ENCODE measurements at regions of chr17 and their contacts with region 1.

Region 1: DNA sequence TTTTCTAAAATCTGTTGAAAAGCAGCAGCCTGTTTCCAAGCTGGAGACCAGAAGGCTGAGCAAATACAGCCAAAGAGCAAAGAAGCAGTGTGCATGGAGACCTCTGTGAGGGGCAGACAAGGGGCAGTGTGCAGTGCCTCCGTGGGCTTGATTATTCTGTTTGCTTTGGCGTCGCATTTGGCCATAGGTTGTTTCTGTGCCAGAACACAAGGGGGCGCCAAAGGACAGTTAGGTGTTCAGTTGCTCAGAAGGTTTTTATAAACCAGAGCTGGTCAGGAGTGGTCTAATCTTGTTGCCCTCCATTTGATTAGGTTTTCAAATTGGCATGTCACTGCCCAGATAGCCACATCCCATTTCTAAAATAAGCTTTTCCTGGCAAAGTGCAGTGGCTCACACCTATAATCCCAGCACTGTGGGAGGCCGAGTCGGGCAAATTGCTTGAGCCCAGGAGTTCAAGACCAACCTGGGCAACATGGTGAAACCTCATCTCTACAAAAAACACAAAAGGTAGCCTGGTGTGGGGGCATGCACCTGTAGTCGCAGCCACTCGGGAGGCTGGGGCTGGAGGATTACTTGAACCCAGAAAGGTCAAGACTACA is 10.6 kb downstream of the MYH3 start:
- DNase-seq: peak; percentile 58 to 65 (median 63)
- H3K4me3 ChIP-seq: no peak overlapping the region
- H3K4me3 Mint-ChIP-seq: no peak overlapping the region
- H3K27ac ChIP-seq: no peak overlapping the region
- H3K27ac Mint-ChIP-seq: no peak overlapping the region
- H3K4me1 ChIP-seq: no peaks in the 10 kb centered on the region
- H3K4me1 Mint-ChIP-seq: peaks cover 0 to 5% (median 2%) of the 10 kb centered on the region in 4 donors
- H3K27me3 ChIP-seq: no peaks in the 10 kb centered on the region
- H3K27me3 Mint-ChIP-seq: no peaks in the 10 kb centered on the region

Region 2: DNA sequence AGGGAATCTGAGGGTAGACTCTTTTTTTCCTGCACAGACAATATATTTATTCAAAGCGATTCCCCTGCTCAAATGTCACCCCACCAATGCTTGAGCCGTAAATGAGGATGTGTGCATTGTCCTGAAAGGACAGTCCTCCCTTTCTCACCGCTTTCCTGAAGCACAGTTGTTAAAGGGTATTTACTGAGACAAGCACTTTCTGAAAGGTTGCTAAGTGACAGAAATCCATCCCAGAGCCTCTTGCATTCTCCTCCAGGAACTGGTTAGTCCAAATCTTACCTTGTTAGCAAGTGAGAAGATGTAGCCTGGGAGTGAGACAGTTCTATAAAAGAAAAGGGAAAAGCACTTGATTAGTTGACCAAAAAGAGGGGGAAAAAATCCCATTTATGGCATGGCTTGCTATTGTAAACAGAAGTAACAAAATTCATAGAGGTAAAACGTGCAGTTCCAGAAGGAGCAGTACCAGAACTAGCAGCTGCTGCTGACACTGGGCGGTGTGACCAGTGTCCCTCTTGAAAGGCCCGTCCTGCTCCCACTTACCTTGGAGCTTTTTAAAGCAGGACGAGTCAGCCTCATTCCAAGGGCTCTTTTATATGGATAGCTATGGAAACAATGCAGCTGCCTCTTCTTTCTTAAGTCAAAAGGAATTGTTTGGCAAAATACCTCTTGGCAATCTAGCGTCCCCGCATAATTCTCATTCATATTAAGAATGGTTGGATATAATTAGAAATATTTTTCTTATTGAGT is 97.2 kb before region 1 on chr17 and contains the start of gene MYH2:
- CTCF ChIA-PET with region 1: no interaction called
- POLR2A ChIA-PET with region 1: no interaction called
- intact Hi-C with region 1: no loop called
- DNase-seq: no peak
- H3K4me3 ChIP-seq: no peak within 1 kb of the TSS
- H3K4me3 Mint-ChIP-seq: no peak within 1 kb of the TSS
- H3K27ac ChIP-seq: no peak within 1 kb of the TSS
- H3K27ac Mint-ChIP-seq: no peak within 1 kb of the TSS
- H3K4me1 ChIP-seq: no peaks in the 10 kb centered on the region
- H3K4me1 Mint-ChIP-seq: no peaks in the 10 kb centered on the region
- H3K27me3 ChIP-seq: no peaks in the 10 kb centered on the region
- H3K27me3 Mint-ChIP-seq: peaks cover 9 to 10% of the 10 kb centered on the region in 2 donors
- total RNA-seq, gene MYH2: not detected

Region 3: DNA sequence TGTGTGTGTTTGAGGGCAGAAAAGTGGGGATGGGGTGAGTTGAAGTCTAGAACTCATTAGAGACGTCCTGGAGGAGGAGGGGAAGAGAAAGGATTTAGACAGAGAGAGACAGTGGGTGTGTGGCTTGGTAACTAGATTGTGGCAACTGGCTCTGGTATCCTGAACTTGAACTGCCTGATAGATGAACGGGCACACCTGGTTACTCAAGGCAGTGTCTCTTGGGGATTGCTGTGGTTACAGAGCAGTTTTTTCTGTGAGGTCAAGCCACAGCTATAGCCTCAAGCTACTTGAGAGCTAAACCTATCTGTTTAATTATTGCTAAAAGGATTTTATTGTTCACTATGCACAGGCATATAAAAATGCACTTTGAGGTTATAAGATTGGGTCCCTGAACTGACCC is 67.2 kb before region 1 on chr17:
- CTCF ChIA-PET with region 1: no interaction called
- POLR2A ChIA-PET with region 1: no interaction called
- intact Hi-C with region 1: no loop called
- DNase-seq: no peak
- H3K4me3 ChIP-seq: no peak overlapping the region
- H3K4me3 Mint-ChIP-seq: no peak overlapping the region
- H3K27ac ChIP-seq: no peak overlapping the region
- H3K27ac Mint-ChIP-seq: no peak overlapping the region
- H3K4me1 ChIP-seq: no peaks in the 10 kb centered on the region
- H3K4me1 Mint-ChIP-seq: no peaks in the 10 kb centered on the region
- H3K27me3 ChIP-seq: no peaks in the 10 kb centered on the region
- H3K27me3 Mint-ChIP-seq: peaks cover 3 to 13% of the 10 kb centered on the region in 2 donors

Region 4: DNA sequence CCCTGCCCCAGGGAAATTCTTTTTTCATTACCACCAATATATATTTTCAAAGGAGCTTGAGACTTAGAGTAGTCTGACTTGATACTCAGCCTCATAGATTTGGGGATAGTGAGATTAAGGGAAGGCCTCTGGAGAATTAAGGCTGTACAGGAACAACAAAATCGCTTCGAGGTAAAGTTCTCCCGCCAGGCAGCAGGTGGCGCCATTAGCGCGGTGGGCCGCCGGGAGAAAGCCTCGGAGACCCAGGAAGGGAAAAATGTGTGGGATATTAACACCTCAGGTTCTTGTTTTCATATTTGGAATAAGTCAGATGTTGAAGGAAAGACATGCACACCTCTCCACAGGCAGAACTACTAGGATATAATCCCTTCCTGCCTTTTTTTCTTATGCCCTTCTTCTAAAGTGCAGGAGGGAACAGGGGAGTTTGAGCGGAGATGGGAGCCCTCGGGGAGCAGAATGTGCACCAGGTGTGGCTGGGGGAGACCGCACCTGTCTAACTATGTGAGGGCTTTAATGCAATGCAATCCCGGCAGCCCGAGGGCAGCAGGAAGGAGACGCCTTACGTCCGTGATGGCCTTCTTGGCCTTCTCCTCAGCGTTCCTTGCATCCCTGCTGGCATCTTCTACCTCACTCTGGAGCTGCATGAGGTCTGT is 15.3 kb before region 1 on chr17:
- CTCF ChIA-PET with region 1: interaction called, 62 read pairs
- POLR2A ChIA-PET with region 1: no interaction called
- intact Hi-C with region 1: no loop called
- DNase-seq: peak in 1 of 5 donors; percentile 33
- H3K4me3 ChIP-seq: no peak overlapping the region
- H3K4me3 Mint-ChIP-seq: peak overlapping the region in 1 of 8 donors; percentile 45
- H3K27ac ChIP-seq: no peak overlapping the region
- H3K27ac Mint-ChIP-seq: no peak overlapping the region
- H3K4me1 ChIP-seq: no peaks in the 10 kb centered on the region
- H3K4me1 Mint-ChIP-seq: peaks cover 0 to 6% (median 4%) of the 10 kb centered on the region in 4 donors
- H3K27me3 ChIP-seq: no peaks in the 10 kb centered on the region
- H3K27me3 Mint-ChIP-seq: no peaks in the 10 kb centered on the region

Region 5: DNA sequence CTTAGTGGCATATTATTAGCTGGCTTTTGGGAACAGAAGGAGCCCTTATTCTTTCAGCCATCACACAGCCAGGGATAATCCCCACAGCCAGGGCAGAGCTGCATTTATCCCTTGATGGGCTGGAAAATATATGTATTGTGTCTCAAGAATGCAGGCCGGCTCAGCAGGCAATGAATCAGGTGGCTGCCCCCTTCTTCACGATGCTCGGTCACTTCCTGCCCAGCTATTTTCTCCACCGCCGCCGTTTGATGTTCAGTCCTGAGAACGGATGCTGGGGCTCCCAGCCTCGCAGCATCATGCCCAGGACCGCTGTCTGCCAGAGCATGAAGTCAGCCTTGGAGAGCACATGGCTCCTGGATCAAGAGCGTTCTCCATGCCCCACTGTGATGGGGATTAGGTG is 14.9 kb after region 1 on chr17:
- CTCF ChIA-PET with region 1: interaction called, 26 read pairs
- POLR2A ChIA-PET with region 1: no interaction called
- intact Hi-C with region 1: no loop called
- DNase-seq: no peak
- H3K4me3 ChIP-seq: no peak overlapping the region
- H3K4me3 Mint-ChIP-seq: no peak overlapping the region
- H3K27ac ChIP-seq: no peak overlapping the region
- H3K27ac Mint-ChIP-seq: no peak overlapping the region
- H3K4me1 ChIP-seq: no peaks in the 10 kb centered on the region
- H3K4me1 Mint-ChIP-seq: no peaks in the 10 kb centered on the region
- H3K27me3 ChIP-seq: no peaks in the 10 kb centered on the region
- H3K27me3 Mint-ChIP-seq: no peaks in the 10 kb centered on the region

Region 6: DNA sequence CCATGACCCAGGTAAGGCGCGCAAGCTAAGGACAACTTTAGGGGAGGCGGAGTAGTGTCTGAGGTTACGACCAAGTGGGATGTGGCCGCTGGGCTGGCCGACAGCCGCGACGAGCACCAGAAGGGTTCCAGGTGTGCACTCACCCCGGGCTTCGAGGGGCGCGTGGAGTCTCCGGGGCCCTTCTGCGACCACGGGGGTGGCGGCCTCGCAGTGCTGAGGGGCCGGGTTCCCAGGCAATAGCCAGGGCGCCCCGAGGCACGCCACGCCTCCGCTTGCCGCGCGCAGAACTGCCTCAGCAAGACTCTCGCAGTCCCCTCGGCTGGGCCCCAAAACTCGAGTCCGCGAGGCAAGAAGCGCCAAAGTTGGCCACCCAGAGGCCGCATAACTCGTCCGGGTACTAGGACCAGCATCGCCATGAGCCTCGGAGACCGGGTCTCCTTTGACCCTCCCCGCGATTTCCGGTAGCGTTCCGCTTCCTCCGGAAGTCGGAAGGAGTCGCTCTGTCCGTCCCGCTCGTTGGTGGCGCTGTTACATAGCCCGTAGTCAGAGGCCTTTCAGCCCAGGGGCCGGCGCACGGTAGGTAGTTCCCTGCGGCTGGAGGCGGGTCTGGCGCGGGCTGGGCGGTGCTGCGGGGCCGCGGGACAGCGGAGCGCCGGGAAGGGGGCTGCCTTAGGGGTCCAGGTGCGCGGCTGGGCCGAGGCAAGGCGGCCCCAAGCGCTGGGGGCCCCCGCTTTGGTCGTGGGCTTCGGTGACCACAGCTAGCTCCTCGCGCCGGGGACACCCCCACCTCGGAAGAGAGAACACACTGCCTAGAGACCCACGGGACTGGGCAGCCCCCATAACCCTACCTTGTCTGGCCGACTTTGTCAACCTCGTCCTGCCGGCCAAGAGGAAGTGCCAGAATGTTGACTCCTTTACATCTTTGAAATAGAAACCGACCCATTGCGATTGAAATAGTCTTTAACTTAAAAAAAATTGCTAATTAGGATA is 50.9 kb after region 1 on chr17 and contains the starts of genes ADPRM and SCO1:
- CTCF ChIA-PET with region 1: interaction called, 10 read pairs
- POLR2A ChIA-PET with region 1: no interaction called
- intact Hi-C with region 1: no loop called
- DNase-seq: peak; percentile 86 to 91 (median 87)
- H3K4me3 ChIP-seq: peak within 1 kb of the TSS; percentile 80 to 95
- H3K4me3 Mint-ChIP-seq: peak within 1 kb of the TSS; percentile 91 to 98 (median 97)
- H3K27ac ChIP-seq: peak within 1 kb of the TSS; percentile 96
- H3K27ac Mint-ChIP-seq: peak within 1 kb of the TSS; percentile 91 to 98 (median 94)
- H3K4me1 ChIP-seq: peaks cover 55% of the 10 kb centered on the region
- H3K4me1 Mint-ChIP-seq: peaks cover 37 to 71% (median 54%) of the 10 kb centered on the region in 4 donors
- H3K27me3 ChIP-seq: no peaks in the 10 kb centered on the region
- H3K27me3 Mint-ChIP-seq: no peaks in the 10 kb centered on the region
- total RNA-seq, gene ADPRM: 45.5 to 46.7 TPM
- total RNA-seq, gene SCO1: 26.0 to 26.1 TPM

Region 7: DNA sequence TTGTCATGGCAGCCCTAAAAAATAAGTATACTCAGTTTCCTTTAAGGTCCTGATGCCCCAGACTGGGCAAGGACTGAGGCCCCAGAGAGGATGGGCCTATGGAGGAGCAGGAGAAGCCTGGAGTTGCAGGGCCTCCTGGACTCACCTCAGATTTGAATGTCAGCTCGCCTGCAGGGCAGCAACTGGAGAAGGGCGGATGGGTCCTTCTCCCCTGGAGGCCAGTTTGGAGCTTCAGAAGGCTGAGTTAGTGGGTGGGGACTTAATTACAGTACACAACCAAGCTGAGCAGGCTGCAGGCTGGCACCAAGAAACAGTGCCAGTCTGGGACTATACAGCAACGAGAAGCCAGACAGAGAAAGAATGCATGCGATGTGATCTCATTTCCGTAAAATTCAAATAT is 185.2 kb after region 1 on chr17:
- CTCF ChIA-PET with region 1: interaction called, 10 read pairs
- POLR2A ChIA-PET with region 1: no interaction called
- intact Hi-C with region 1: no loop called
- DNase-seq: no peak
- H3K4me3 ChIP-seq: no peak overlapping the region
- H3K4me3 Mint-ChIP-seq: no peak overlapping the region
- H3K27ac ChIP-seq: no peak overlapping the region
- H3K27ac Mint-ChIP-seq: no peak overlapping the region
- H3K4me1 ChIP-seq: no peaks in the 10 kb centered on the region
- H3K4me1 Mint-ChIP-seq: no peaks in the 10 kb centered on the region
- H3K27me3 ChIP-seq: no peaks in the 10 kb centered on the region
- H3K27me3 Mint-ChIP-seq: peaks cover 0 to 5% of the 10 kb centered on the region in 2 donors

Region 8: GRCh38 chr17:10844621-10845387 is 198.3 kb after region 1 on chr17:
- CTCF ChIA-PET with region 1: interaction called, 142 read pairs
- POLR2A ChIA-PET with region 1: interaction called, 4 read pairs
- intact Hi-C with region 1: loop called (anchors 1 kb)
- DNase-seq: peak; percentile 60 to 66 (median 64)
- H3K4me3 ChIP-seq: peak overlapping the region in 1 of 2 donors; percentile 50
- H3K4me3 Mint-ChIP-seq: peak overlapping the region; percentile 75 to 89 (median 83)
- H3K27ac ChIP-seq: no peak overlapping the region
- H3K27ac Mint-ChIP-seq: peak overlapping the region in 2 of 7 donors; percentile 9 to 44
- H3K4me1 ChIP-seq: peaks cover 7% of the 10 kb centered on the region
- H3K4me1 Mint-ChIP-seq: peaks cover 2 to 12% (median 8%) of the 10 kb centered on the region in 4 donors
- H3K27me3 ChIP-seq: no peaks in the 10 kb centered on the region
- H3K27me3 Mint-ChIP-seq: peaks cover 6 to 17% of the 10 kb centered on the region in 2 donors